Activated CD8-positive, alpha-beta T cell treated with anti-CD3 and anti-CD28 coated beads for 36 hours (primary cell): ENCODE measurements at regions of chr16 and their contacts with region 1.

Region 1: DNA sequence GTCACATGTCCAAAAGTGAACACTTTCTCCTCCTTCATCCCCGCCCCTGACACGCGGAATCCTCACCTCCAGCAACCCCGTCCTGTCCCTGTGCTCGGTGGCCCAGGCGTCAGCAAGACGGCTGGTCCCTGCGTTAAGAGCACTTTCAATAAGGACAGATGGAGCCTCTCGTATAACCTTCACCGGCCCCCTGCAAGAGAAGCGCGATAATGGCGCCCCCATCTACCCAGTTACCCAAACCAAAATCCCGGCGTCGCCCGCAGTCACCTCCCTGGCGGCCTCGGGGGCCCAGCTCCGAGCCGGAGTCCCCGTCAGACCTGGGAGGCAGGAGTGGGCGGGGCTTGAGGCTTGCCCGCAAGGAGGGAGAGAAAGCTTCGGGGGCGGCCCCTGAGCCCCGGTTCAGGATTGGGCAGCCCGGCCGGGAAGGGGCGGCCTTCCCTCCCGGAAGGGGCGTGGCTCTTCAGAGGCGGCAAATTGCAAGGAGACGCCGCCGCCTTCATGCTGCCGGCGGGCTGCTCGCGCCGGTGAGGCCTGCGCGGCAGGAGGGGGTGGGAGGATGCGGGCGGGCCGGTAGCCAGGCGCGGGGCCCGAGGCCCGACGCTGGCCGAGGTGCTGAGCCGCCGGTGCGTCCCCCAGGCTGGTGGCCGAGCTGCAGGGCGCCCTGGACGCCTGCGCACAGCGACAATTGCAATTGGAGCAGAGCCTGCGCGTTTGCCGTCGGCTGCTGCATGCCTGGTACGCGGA is at the start of gene TEDC2:
- DNase-seq: peak; percentile 99
- ATAC-seq: peak; percentile 99
- H3K4me3 Mint-ChIP-seq: peak within 1 kb of the TSS; percentile 73
- H3K27ac Mint-ChIP-seq: peak within 1 kb of the TSS; percentile 66
- H3K4me1 Mint-ChIP-seq: peaks cover 8% of the 10 kb centered on the region
- H3K27me3 Mint-ChIP-seq: no peaks in the 10 kb centered on the region
- CTCF ChIP-seq: no peak
- total RNA-seq, gene TEDC2: 23.2 to 30.7 TPM

Region 2: GRCh38 chr16:2333772-2334379 is 125.9 kb before region 1 on chr16:
- CTCF ChIA-PET with region 1: no interaction called
- POLR2A ChIA-PET with region 1: no interaction called
- intact Hi-C with region 1: no loop called
- DNase-seq: no peak
- ATAC-seq: no peak
- H3K4me3 Mint-ChIP-seq: no peak overlapping the region
- H3K27ac Mint-ChIP-seq: no peak overlapping the region
- H3K4me1 Mint-ChIP-seq: peaks cover 8% of the 10 kb centered on the region
- H3K27me3 Mint-ChIP-seq: peaks cover 6% of the 10 kb centered on the region
- CTCF ChIP-seq: no peak

Region 3: GRCh38 chr16:2447920-2448583 is 11.8 kb before region 1 on chr16:
- CTCF ChIA-PET with region 1: no interaction called
- POLR2A ChIA-PET with region 1: interaction called, 15 read pairs
- intact Hi-C with region 1: no loop called
- DNase-seq: no peak
- ATAC-seq: no peak
- H3K4me3 Mint-ChIP-seq: no peak overlapping the region
- H3K27ac Mint-ChIP-seq: no peak overlapping the region
- H3K4me1 Mint-ChIP-seq: no peaks in the 10 kb centered on the region
- H3K27me3 Mint-ChIP-seq: no peaks in the 10 kb centered on the region
- CTCF ChIP-seq: no peak